Naive thymus-derived CD8-positive, alpha-beta T cell (primary cell): ENCODE measurements at regions of chr15 and their contacts with region 1.

Region 1: DNA sequence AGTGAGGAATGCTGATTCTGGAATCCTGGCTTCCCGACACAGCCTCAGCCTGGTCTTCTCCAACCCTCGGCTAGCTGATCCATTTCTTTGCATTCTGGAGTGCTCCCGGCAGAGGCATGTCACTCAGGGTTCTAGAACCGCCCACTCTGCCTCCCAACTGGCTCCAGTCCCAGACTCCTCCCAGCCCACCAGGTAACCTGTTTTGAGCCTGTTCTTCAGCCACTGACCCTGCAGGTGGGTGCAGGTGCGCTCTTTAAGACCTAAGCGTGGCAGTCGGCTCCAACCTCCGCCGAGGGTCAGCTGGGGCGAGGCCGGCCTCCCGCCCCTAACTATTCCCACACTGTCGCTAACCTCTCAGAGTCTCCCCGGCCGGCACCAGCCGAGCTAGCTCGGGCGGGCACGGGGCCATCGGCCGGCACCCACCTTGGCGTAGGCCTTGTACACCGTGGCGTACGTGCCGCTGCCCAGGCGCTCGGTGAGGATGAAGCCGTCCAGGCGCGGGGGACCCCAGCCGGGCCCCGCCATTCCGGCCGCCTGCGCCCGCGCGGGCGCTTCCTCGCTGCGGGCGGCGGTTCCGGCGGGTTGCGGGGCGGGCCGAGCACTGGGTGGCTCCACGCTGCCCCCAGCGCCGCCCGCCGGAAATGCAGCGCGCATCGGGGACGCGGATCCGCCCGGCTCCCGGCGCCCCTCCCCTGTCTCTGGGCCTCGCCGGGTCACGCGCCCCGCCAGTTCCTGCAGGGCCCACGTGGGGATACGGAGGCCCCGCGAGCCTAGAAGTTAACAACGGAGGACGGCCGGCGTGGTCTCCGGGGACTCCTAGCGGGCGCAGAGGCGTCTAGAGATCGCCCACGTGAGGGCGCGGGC is at the start of gene ULK3:
- DNase-seq: peak; percentile 88 to 95 (median 92)
- ATAC-seq: peak; percentile 87 to 89
- H3K4me3 Mint-ChIP-seq: peak within 1 kb of the TSS; percentile 85 to 93 (median 88)
- H3K27ac Mint-ChIP-seq: peak within 1 kb of the TSS; percentile 84 to 98 (median 96)
- H3K4me1 Mint-ChIP-seq: peaks cover 30 to 56% (median 53%) of the 10 kb centered on the region in 4 donors
- H3K27me3 Mint-ChIP-seq: no peaks in the 10 kb centered on the region
- polyA plus RNA-seq, gene ULK3: 16.3 to 32.2 (median 16.6) TPM

Region 2: GRCh38 chr15:74873036-74873755 is 30.4 kb after region 1 on chr15 and contains the start of gene SCAMP2:
- POLR2A ChIA-PET with region 1: interaction called, 68 read pairs
- DNase-seq: peak; percentile 82 to 98 (median 91)
- ATAC-seq: peak; percentile 96
- H3K4me3 Mint-ChIP-seq: peak within 1 kb of the TSS; percentile 94 to 100 (median 98)
- H3K27ac Mint-ChIP-seq: peak within 1 kb of the TSS; percentile 90 to 99 (median 96)
- H3K4me1 Mint-ChIP-seq: peaks cover 15 to 56% (median 46%) of the 10 kb centered on the region in 4 donors
- H3K27me3 Mint-ChIP-seq: no peaks in the 10 kb centered on the region
- polyA plus RNA-seq, gene SCAMP2: 109 to 121 (median 119) TPM

Region 3: GRCh38 chr15:74906446-74907162 is 63.8 kb after region 1 on chr15 and contains the start of gene FAM219B:
- POLR2A ChIA-PET with region 1: interaction called, 23 read pairs
- DNase-seq: peak; percentile 37 to 85 (median 66)
- ATAC-seq: peak; percentile 79 to 83
- H3K4me3 Mint-ChIP-seq: peak within 1 kb of the TSS; percentile 94 to 99 (median 98)
- H3K27ac Mint-ChIP-seq: peak within 1 kb of the TSS; percentile 93 to 99 (median 97)
- H3K4me1 Mint-ChIP-seq: peaks cover 24 to 46% (median 42%) of the 10 kb centered on the region in 4 donors
- H3K27me3 Mint-ChIP-seq: no peaks in the 10 kb centered on the region
- polyA plus RNA-seq, gene FAM219B: 18.8 to 22.3 (median 20.7) TPM